Calu3 (cell line): ENCODE measurements at regions of chr2 and their contacts with region 1.

Region 1: GRCh38 chr2:143936848-143937722 is 582.8 kb downstream of the ZEB2 start:
- DNase-seq: peak; percentile 56
- H3K4me3 Mint-ChIP-seq: peak overlapping the region; percentile 80
- H3K27ac Mint-ChIP-seq: peak overlapping the region; percentile 95
- H3K4me1 Mint-ChIP-seq: peaks cover 69% of the 10 kb centered on the region
- H3K27me3 Mint-ChIP-seq: no peaks in the 10 kb centered on the region
- CTCF ChIP-seq: no peak

Region 2: GRCh38 chr2:143686585-143687164 is 250.4 kb before region 1 on chr2:
- CTCF ChIA-PET with region 1: interaction called, 3 read pairs
- intact Hi-C with region 1: loop called (anchors 10 kb)
- DNase-seq: peak; percentile 20
- H3K4me3 Mint-ChIP-seq: no peak overlapping the region
- H3K27ac Mint-ChIP-seq: no peak overlapping the region
- H3K4me1 Mint-ChIP-seq: no peaks in the 10 kb centered on the region
- H3K27me3 Mint-ChIP-seq: no peaks in the 10 kb centered on the region
- CTCF ChIP-seq: peak; percentile 37

Region 3: GRCh38 chr2:143802871-143803650 is 134.0 kb before region 1 on chr2:
- CTCF ChIA-PET with region 1: no interaction called
- intact Hi-C with region 1: loop called (anchors 10 kb)
- DNase-seq: no peak
- H3K4me3 Mint-ChIP-seq: no peak overlapping the region
- H3K27ac Mint-ChIP-seq: no peak overlapping the region
- H3K4me1 Mint-ChIP-seq: no peaks in the 10 kb centered on the region
- H3K27me3 Mint-ChIP-seq: no peaks in the 10 kb centered on the region
- CTCF ChIP-seq: no peak

Region 4: DNA sequence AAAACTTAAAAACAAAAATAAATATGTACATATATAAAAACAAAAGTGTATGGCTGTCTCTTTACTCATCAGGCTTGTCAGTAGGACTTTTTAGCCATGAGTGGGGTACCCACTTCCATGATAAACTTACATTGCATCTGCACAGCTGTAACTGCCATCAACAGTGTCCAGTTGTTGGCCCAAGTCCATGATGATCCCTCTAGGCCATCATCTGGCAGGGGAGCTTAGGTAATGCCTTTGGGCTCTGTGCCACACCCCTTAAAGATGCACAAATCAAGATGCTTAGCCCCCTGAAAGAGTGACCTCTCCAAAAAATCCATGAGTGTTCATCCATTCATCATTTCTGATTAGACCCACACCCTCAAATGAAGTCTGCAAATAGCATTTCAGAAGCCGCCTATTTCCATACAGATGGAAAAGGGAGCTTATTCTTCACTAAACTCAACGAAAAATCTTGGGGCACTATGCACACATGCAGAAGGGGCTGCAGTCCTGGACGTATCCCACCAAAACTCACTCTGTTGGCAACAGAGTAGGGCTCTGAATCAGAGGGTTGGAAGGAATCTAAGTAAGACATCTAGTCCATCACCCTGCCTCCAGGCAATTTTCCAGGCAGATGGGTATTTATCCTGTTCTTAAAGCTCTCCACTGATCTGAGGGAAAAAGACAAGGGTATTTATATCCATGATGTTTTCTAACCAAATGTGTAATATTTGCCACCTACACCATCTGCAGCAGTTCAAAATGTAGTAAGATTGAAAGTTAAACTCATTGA is 108.1 kb before region 1 on chr2:
- CTCF ChIA-PET with region 1: no interaction called
- intact Hi-C with region 1: no loop called
- DNase-seq: no peak
- H3K4me3 Mint-ChIP-seq: no peak overlapping the region
- H3K27ac Mint-ChIP-seq: no peak overlapping the region
- H3K4me1 Mint-ChIP-seq: no peaks in the 10 kb centered on the region
- H3K27me3 Mint-ChIP-seq: no peaks in the 10 kb centered on the region
- CTCF ChIP-seq: no peak

Region 5: DNA sequence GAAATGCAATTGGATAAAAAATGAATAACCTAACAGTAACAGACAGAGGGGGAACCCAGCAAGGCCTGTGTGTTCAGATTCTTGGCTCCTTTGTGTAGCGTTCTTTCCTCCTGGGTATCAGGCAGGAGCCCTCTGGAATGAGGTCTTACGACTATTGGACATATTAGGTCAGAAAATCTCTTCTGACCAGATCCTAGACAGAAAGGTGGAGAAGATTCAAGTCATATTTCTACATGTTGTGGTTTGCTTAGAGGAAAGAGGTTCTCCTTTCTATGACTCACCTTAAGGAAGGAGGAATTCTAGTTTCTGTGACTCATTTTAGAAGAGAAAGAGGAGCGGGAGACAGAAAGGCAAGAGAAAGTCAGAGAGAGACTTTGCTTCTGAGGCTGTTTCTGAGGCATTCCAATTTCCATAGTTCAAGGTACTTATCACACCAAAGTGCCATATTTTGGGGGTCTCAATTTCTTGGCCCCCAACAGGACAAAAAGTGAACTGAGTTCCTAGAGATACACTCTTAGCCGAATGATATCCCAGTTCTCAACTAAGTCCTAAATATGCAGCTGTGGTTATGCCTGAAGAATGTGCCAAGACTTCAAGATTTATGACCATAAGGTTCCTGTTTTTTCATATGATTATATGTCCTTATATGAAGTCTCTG is 35.8 kb before region 1 on chr2:
- CTCF ChIA-PET with region 1: no interaction called
- intact Hi-C with region 1: loop called (anchors 2 kb)
- DNase-seq: peak; percentile 31
- H3K4me3 Mint-ChIP-seq: peak overlapping the region; percentile 18
- H3K27ac Mint-ChIP-seq: peak overlapping the region; percentile 84
- H3K4me1 Mint-ChIP-seq: peaks cover 15% of the 10 kb centered on the region
- H3K27me3 Mint-ChIP-seq: no peaks in the 10 kb centered on the region
- CTCF ChIP-seq: no peak

Region 6: DNA sequence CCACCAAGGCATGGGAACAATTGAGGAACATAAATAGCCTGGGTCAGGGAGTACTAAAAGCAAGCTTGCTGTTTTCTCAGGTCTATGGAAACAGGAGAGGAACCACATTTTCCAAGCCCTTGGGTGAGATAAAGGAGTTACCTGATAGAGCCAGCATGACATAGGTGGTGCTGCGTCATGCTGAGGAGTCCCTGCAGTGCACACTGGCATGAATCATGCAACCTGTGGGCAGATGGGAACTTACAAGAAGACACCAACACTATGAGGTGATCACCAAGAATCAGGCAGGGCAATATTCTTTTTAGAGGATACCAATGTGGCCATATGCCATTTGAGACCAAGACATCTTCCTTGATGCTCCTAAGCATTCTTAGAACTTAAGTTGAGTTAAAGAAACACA is 51.0 kb after region 1 on chr2:
- CTCF ChIA-PET with region 1: no interaction called
- intact Hi-C with region 1: no loop called
- DNase-seq: no peak
- H3K4me3 Mint-ChIP-seq: no peak overlapping the region
- H3K27ac Mint-ChIP-seq: no peak overlapping the region
- H3K4me1 Mint-ChIP-seq: no peaks in the 10 kb centered on the region
- H3K27me3 Mint-ChIP-seq: no peaks in the 10 kb centered on the region
- CTCF ChIP-seq: no peak

Region 7: DNA sequence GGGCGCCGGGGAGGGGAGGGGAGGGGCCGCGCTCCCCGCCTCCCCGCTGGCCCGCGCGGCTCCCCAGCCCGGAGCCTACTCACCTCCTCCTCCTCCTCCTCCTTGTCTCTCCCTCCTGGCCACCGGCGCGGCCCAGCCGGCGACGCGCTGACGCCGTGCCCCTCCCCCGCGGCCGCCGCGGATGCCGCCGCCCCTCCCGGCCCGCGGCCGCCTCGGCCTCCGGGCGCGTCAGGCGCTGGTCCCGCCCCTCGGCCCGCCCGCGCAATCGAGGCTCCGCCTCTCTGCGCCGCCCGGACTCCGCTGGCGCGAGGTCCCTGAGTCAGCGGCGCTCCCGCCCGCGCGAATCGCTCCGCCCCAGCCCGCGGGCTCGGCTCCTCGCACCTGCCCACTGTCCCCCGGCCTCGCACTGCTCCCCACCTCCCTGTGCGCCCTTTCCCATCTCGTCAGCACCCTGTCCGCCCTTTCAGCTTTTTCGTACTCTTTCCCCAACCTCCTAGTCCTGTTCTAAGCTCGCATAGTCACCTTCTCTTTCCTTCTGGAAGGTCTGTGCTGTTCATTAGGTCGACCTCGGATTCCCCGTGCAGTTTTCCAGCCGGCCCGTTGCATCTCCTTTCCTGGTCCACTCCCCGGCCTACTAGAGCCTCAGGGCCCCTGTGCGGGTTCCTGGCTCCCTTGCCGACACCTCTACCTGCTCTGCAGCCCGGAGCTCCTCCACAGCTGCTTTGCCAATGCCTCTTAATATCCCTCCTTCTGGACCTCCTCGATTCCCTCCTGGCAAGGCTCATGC is 395.5 kb after region 1 on chr2:
- CTCF ChIA-PET with region 1: no interaction called
- intact Hi-C with region 1: loop called (anchors 5 kb)
- DNase-seq: peak; percentile 94
- H3K4me3 Mint-ChIP-seq: peak overlapping the region; percentile 79
- H3K27ac Mint-ChIP-seq: peak overlapping the region; percentile 96
- H3K4me1 Mint-ChIP-seq: peaks cover 10% of the 10 kb centered on the region
- H3K27me3 Mint-ChIP-seq: no peaks in the 10 kb centered on the region
- CTCF ChIP-seq: no peak